ENCODE measurements at regions of chr19 and their contacts with region 1.

Region 1: GRCh38 chr19:33125929-33126388 is 6.0 kb upstream of the WDR88 start:
- DNase-seq: peak; percentile 33
- H3K4me3 ChIP-seq: no peak overlapping the region
- H3K27ac ChIP-seq: no peak overlapping the region
- H3K4me1 ChIP-seq: no peaks in the 10 kb centered on the region
- H3K27me3 ChIP-seq: no peaks in the 10 kb centered on the region
- CTCF ChIP-seq: peak; percentile 81 to 82

Region 2: GRCh38 chr19:33186431-33187182 is 60.6 kb after region 1 on chr19:
- CTCF ChIA-PET with region 1: no interaction called
- dilution Hi-C with region 1: no loop called
- in situ Hi-C with region 1: no loop called
- intact Hi-C with region 1: loop called (anchors 1 kb)
- DNase-seq: no peak
- H3K4me3 ChIP-seq: no peak overlapping the region
- H3K27ac ChIP-seq: no peak overlapping the region
- H3K4me1 ChIP-seq: no peaks in the 10 kb centered on the region
- H3K27me3 ChIP-seq: no peaks in the 10 kb centered on the region
- CTCF ChIP-seq: no peak